ENCODE measurements at regions of chr14 and their contacts with region 1.

Region 1: DNA sequence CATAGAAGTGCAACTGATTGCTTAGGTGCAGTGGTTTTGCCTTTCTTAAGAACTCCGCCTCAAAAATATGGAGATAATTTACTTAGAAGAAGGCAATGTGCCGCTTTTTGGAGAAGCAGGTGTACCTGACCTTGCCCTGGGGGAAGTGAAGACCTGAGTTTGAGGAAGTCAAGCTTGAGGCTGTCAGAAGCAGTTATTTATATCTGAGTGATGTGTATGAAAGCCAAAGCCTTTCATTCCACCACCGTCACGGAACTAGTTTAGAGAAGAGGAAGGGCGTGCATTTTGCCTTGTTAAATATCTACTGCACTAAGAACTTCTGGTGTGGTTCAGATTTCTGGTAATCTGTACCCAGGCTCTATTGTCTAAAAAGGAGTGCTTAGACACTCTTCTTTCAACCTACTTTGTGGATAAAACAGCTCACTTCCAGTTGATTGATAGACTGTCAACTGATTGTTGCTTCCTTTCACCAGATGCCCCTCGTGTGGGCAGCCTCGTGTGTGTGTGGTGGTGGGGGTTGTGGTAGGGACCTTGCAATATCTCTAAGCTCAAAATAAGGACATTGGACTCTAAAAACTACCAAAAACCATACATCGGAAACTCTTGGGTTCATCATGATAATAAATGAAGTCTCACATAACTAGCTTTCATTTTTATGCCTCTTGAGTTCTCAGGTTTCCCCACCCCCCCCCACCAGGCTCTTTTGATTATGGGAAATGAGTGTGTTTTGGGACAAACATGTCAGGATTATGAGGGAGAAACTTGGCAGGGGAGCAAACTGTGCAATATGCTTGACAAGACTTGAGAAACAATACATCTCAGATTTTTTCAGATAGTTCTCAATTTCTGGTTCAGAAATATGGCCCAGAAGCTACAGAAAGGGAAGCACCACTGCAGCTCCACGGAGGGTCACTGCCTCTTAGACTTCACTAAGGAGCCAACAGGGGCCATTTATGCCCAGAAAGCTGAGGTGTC is 78.6 kb downstream of the ARF6 start:
- DNase-seq: peak in 8 of 9 donors; percentile 59 to 94 (median 90)
- ATAC-seq: peak; percentile 92
- H3K4me3 ChIP-seq: peak overlapping the region; percentile 40
- H3K4me3 Mint-ChIP-seq: peak overlapping the region; percentile 75 to 96 (median 86)
- H3K27ac ChIP-seq: peak overlapping the region; percentile 74
- H3K27ac Mint-ChIP-seq: peak overlapping the region; percentile 96 to 99 (median 99)
- H3K4me1 ChIP-seq: peaks cover 35 to 49% of the 10 kb centered on the region in 2 donors
- H3K4me1 Mint-ChIP-seq: peaks cover 32 to 88% (median 63%) of the 10 kb centered on the region in 7 donors
- H3K27me3 ChIP-seq: no peaks in the 10 kb centered on the region
- H3K27me3 Mint-ChIP-seq: no peaks in the 10 kb centered on the region

Region 2: GRCh38 chr14:49633640-49634546 is 337.6 kb before region 1 on chr14:
- CTCF ChIA-PET with region 1: no interaction called
- POLR2A ChIA-PET with region 1: no interaction called
- intact Hi-C with region 1: loop called in 1 of 2 experiments (anchors 10 kb)
- DNase-seq: peak; percentile 89 to 96 (median 93)
- ATAC-seq: peak; percentile 92
- H3K4me3 ChIP-seq: peak overlapping the region; percentile 99
- H3K4me3 Mint-ChIP-seq: peak overlapping the region; percentile 81 to 99 (median 96)
- H3K27ac ChIP-seq: peak overlapping the region; percentile 96
- H3K27ac Mint-ChIP-seq: peak overlapping the region; percentile 71 to 96 (median 90)
- H3K4me1 ChIP-seq: peaks cover 19 to 29% of the 10 kb centered on the region in 2 donors
- H3K4me1 Mint-ChIP-seq: peaks cover 35 to 71% (median 52%) of the 10 kb centered on the region in 7 donors
- H3K27me3 ChIP-seq: no peaks in the 10 kb centered on the region
- H3K27me3 Mint-ChIP-seq: no peaks in the 10 kb centered on the region

Region 3: GRCh38 chr14:49774106-49774505 is 197.3 kb before region 1 on chr14:
- CTCF ChIA-PET with region 1: no interaction called
- POLR2A ChIA-PET with region 1: no interaction called
- intact Hi-C with region 1: no loop called
- DNase-seq: no peak
- ATAC-seq: no peak
- H3K4me3 ChIP-seq: no peak overlapping the region
- H3K4me3 Mint-ChIP-seq: no peak overlapping the region
- H3K27ac ChIP-seq: peak overlapping the region; percentile 26
- H3K27ac Mint-ChIP-seq: peak overlapping the region in 6 of 9 donors; percentile 47 to 74 (median 63)
- H3K4me1 ChIP-seq: peaks cover 17 to 18% of the 10 kb centered on the region in 2 donors
- H3K4me1 Mint-ChIP-seq: peaks cover 24 to 49% (median 38%) of the 10 kb centered on the region in 7 donors
- H3K27me3 ChIP-seq: no peaks in the 10 kb centered on the region
- H3K27me3 Mint-ChIP-seq: no peaks in the 10 kb centered on the region

Region 4: DNA sequence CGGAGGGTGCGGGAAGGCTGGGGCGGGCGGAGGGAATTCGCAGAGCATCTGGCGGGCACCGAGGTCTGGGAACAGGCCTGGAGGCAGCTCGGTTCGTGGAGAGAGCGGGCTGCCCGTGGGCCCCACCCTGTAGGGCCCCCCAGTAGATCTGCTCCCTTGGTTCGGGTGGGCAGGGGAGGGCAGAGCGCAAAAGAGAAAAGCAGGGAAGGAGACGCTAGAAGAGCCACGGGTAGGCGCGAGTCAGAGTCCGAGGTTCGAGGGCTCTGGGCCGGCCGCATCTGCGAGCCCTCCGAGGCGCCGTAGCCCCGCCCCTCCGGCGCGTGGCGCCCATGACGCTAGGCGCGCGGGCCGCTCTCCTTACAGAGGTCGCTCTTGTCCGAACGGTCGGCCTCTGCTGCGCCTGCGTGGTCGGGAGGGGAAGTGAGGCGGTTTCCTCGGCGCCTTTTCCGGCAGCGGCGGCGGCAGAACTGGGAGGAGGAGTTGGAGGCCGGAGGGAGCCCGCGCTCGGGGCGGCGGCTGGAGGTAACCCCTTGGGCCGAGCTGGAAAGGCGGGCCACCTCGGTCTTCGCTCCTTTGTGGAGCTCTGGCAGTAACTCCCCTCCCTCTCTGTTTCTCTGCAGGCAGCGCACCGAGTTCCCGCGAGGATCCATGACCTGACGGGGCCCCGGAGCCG is 78.7 kb before region 1 on chr14 and contains the start of gene ARF6:
- CTCF ChIA-PET with region 1: interaction called, 3 read pairs
- POLR2A ChIA-PET with region 1: interaction called, 62 read pairs
- intact Hi-C with region 1: loop called (anchors 1 kb)
- DNase-seq: peak; percentile 85 to 98 (median 89)
- ATAC-seq: peak; percentile 93
- H3K4me3 ChIP-seq: peak within 1 kb of the TSS; percentile 68
- H3K4me3 Mint-ChIP-seq: peak within 1 kb of the TSS; percentile 95 to 100 (median 98)
- H3K27ac ChIP-seq: peak within 1 kb of the TSS; percentile 97
- H3K27ac Mint-ChIP-seq: peak within 1 kb of the TSS; percentile 98 to 100 (median 99)
- H3K4me1 ChIP-seq: peaks cover 10 to 18% of the 10 kb centered on the region in 2 donors
- H3K4me1 Mint-ChIP-seq: peaks cover 21 to 42% (median 40%) of the 10 kb centered on the region in 7 donors
- H3K27me3 ChIP-seq: no peaks in the 10 kb centered on the region
- H3K27me3 Mint-ChIP-seq: no peaks in the 10 kb centered on the region
- total RNA-seq, gene ARF6: 61.9 to 173 (median 77.6) TPM

Region 5: DNA sequence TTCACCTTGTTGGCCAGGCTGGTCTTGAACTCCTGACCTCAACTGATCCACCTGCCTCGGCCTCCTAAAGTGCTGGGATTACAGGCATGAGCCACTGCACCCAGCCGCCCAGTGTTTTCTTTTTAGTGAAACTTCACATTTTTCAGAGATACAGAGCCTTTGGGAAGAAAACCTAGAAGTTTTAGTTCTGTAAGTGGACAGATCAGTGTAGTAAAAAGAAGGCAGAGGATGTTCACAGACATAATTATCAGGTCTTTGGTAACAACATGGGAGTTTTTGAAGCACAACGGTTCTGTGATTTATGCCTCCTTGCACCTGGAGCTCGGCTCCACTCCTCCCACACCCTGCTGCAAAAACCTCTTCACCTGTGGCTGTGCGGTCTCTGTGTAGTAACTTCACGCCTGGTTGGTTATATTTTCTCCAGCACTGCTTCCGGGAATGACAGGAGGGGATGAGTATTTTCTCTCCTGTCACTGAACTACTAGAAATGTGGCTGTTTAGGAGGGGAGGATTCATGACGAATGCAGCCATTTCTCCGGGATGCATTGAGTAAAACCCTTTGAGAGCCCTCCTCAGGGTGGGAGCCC is 11.5 kb before region 1 on chr14:
- CTCF ChIA-PET with region 1: interaction called, 6 read pairs
- POLR2A ChIA-PET with region 1: interaction called, 9 read pairs
- intact Hi-C with region 1: loop called in 1 of 2 experiments (anchors 1 kb)
- DNase-seq: peak in 7 of 9 donors; percentile 19 to 51 (median 35)
- ATAC-seq: peak; percentile 70
- H3K4me3 ChIP-seq: no peak overlapping the region
- H3K4me3 Mint-ChIP-seq: peak overlapping the region in 9 of 10 donors; percentile 13 to 72 (median 59)
- H3K27ac ChIP-seq: peak overlapping the region; percentile 32
- H3K27ac Mint-ChIP-seq: peak overlapping the region; percentile 57 to 85 (median 79)
- H3K4me1 ChIP-seq: peaks cover 0 to 17% of the 10 kb centered on the region in 2 donors
- H3K4me1 Mint-ChIP-seq: peaks cover 13 to 43% (median 31%) of the 10 kb centered on the region in 7 donors
- H3K27me3 ChIP-seq: no peaks in the 10 kb centered on the region
- H3K27me3 Mint-ChIP-seq: no peaks in the 10 kb centered on the region

Region 6: GRCh38 chr14:50038398-50039119 is 67.1 kb after region 1 on chr14:
- CTCF ChIA-PET with region 1: no interaction called
- POLR2A ChIA-PET with region 1: interaction called, 11 read pairs
- intact Hi-C with region 1: loop called in 1 of 2 experiments (anchors 1 kb)
- DNase-seq: peak in 1 of 9 donors; percentile 69
- ATAC-seq: peak; percentile 79
- H3K4me3 ChIP-seq: no peak overlapping the region
- H3K4me3 Mint-ChIP-seq: peak overlapping the region in 3 of 10 donors; percentile 40 to 59 (median 53)
- H3K27ac ChIP-seq: no peak overlapping the region
- H3K27ac Mint-ChIP-seq: peak overlapping the region in 8 of 9 donors; percentile 36 to 95 (median 83)
- H3K4me1 ChIP-seq: peaks cover 46 to 52% of the 10 kb centered on the region in 2 donors
- H3K4me1 Mint-ChIP-seq: peaks cover 33 to 68% (median 54%) of the 10 kb centered on the region in 7 donors
- H3K27me3 ChIP-seq: no peaks in the 10 kb centered on the region
- H3K27me3 Mint-ChIP-seq: no peaks in the 10 kb centered on the region

Region 7: DNA sequence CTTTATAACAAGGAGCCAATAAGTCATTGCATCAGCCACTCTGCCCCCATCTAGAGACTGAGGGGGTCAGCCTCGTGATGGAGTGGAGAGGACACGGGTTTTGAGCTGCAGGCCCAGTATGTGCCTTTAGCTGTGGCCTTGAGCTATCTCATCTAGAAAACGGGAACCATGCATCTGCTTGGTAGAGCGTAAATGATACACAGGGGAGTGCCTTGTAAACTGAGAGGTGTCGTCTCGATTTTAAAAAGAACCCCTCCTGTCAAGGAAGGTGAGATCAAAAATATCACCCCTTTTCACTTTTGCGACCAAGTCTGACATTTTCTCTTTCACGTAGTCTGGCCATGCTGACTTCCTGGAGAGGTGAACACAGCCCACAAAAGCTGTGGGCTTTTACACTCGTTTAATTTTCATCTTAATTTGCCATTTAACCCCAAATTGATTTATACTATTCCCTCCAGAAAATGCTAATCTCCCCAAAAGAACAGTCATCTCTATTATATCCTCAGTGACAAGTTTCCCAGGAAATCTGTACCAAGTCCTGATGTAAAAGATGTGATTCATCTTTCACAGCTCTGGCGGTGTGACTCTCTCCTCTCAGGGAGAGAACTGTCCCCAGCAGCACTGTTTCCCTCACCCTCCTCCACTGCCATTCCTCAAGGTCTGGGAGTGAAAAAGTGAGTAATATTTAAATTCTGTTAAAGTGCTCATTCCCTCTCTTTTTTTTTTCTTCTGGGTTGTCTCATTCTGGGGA is 114.3 kb after region 1 on chr14:
- CTCF ChIA-PET with region 1: interaction called, 7 read pairs
- POLR2A ChIA-PET with region 1: interaction called, 24 read pairs
- intact Hi-C with region 1: loop called (anchors 1 kb)
- DNase-seq: peak in 1 of 9 donors; percentile 45
- ATAC-seq: no peak
- H3K4me3 ChIP-seq: no peak overlapping the region
- H3K4me3 Mint-ChIP-seq: peak overlapping the region; percentile 56 to 80 (median 70)
- H3K27ac ChIP-seq: peak overlapping the region; percentile 97
- H3K27ac Mint-ChIP-seq: peak overlapping the region; percentile 86 to 97 (median 90)
- H3K4me1 ChIP-seq: peaks cover 86 to 94% of the 10 kb centered on the region in 2 donors
- H3K4me1 Mint-ChIP-seq: peaks cover 65 to 97% (median 91%) of the 10 kb centered on the region in 7 donors
- H3K27me3 ChIP-seq: no peaks in the 10 kb centered on the region
- H3K27me3 Mint-ChIP-seq: no peaks in the 10 kb centered on the region

Region 8: DNA sequence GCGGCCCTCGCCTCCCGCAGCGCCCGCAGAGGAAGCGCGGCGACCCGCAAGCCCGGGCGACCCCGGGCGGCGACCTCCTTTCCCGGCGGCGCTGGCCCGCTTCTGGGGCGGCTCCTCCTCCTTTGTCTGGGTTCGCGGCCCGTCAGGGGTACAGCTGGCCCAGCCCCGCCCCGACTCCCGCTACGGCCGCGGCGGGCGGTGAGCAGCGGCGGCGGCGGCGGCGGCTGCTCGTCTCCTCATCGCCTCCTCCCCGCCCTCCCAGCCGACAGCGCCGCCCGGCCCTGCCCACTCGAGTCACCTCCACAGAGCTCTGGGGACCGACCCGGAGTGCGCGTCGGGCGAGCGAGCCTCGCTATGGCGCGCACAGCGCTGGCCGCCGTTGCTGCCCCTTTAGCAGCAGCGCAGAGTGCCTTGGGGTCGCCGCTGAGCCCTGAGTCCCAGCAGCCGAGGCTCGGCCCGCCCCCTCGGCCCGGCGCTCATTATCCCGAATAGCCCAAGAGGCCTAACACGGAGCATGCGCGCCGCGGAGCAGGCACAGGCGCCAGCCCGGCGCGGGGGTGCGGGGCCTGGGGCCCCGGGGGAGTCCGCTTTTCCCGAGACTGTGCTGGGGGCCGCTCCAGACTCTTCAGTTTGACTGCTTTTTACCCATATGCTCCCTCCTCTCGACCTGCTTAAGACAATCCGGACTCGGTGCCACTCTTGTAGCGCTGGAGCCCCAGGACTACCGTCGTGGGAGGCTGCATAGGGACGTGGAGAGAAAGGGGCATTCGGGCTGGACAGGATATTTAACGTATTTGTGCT is 260.2 kb after region 1 on chr14 and contains the start of gene SOS2:
- CTCF ChIA-PET with region 1: no interaction called
- POLR2A ChIA-PET with region 1: no interaction called
- intact Hi-C with region 1: loop called in 1 of 2 experiments (anchors 2 kb)
- DNase-seq: peak; percentile 71 to 84 (median 80)
- ATAC-seq: peak; percentile 92
- H3K4me3 ChIP-seq: peak within 1 kb of the TSS; percentile 89
- H3K4me3 Mint-ChIP-seq: peak within 1 kb of the TSS; percentile 80 to 97 (median 91)
- H3K27ac ChIP-seq: peak within 1 kb of the TSS; percentile 81
- H3K27ac Mint-ChIP-seq: peak within 1 kb of the TSS; percentile 90 to 96 (median 95)
- H3K4me1 ChIP-seq: peaks cover 6 to 17% of the 10 kb centered on the region in 2 donors
- H3K4me1 Mint-ChIP-seq: peaks cover 19 to 47% (median 42%) of the 10 kb centered on the region in 7 donors
- H3K27me3 ChIP-seq: no peaks in the 10 kb centered on the region
- H3K27me3 Mint-ChIP-seq: no peaks in the 10 kb centered on the region
- total RNA-seq, gene SOS2: 19.7 to 49.6 (median 38.7) TPM